Left cardiac atrium (tissue), 4 donors: ENCODE measurements at regions of chr20 and their contacts with region 1.

Region 1: GRCh38 chr20:57672159-57672558 is 37.7 kb downstream of the PMEPA1 start:
- DNase-seq: peak; percentile 85
- ATAC-seq: peak; percentile 34 to 82

Region 2: DNA sequence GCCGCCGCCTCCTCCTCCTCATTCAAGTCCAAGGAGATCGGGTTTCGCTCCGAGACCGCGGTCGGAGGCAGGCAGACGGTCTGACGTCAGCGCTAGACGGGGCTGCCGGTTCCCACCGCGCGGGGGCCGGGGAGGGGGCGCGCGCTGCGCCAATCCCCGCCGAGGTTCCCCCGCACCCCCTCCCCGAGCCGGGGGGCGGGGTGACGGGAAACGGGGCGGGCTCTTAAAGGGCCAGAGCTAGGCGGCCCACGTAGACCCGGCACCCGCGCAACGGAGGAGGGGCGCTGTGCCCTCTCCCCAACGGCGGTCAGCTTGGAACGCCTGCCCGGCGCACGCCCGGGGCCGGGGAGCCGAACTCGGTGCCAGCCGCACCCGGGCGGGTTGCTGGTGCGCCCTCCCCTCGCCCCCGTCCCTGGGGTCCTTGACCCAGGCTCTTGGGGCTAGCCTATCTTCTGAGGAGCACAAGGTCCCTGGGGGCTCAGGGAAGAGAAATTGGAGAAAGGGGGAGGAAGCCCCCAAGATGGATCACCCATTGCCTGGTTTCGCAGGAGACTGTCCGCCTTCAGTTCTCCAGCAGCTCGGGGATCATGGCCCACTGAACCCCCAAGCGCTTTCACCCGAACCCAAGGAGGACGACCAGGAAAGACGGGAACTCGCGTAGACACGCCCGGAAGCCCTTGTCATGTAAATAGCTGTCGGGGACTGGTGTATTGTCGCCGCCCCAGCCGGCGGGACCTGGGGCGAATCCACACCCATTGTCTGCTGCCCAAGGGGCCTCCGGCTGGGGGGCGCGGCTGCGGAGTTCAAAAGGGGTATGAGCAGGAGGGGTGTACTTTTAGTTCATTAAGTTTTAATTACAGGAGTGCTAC is 38.0 kb after region 1 on chr20 and contains the start of gene PMEPA1:
- intact Hi-C with region 1: loop called in 1 of 2 experiments (anchors 5 kb)
- DNase-seq: peak; percentile 96
- ATAC-seq: peak; percentile 92 to 94
- total RNA-seq, gene PMEPA1: 28.3 to 60.3 TPM

Region 3: GRCh38 chr20:57772276-57773030 is 100.3 kb after region 1 on chr20:
- intact Hi-C with region 1: no loop called
- DNase-seq: no peak
- ATAC-seq: peak in 1 of 2 donors; percentile 84